PC-9 (cell line): ENCODE measurements at regions of chr12 and their contacts with region 1.

Region 1: DNA sequence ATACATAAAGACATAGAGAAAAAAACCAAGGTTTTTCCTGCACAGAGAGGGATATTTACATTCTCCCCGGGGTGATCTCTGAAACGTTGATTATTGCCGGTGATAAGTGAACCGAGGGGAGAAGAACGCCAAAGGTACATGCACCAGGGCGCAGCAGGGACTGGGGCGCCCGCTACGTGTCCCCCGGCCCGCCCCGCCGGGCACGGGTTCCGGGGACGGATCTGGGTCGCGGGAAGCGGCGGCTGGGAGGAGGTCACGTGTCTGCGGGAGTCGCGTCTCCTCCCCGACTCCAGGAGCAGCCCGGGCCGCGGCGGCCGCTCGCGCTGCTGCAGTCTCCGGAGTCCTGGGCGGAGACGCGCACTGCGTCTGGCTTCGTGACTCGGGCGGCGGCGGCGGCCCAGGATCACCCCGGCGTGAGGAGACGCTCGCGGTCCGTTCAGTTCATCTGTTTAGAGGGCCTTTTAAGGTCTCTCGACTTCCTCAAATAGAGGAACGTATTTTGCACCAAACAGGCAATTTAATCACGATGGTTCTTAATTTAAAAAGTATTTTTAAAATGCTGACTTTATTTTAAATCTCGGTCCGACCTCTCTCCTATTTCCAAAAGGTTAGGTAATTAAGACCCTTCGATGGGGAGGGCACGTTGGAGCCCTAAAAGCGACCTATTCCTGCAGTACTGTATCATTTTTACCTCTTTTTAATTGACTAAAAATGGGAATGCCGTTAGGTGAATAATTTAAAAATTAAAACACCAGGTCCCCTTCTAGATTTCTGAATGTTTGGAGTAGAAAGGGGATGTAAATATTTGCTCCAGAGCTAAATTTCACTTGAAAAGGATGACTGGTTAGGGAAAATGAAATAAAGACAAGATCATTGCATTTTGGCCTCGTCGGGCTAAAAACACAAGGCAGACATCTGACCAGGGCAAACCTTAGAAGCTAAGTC is 1.8 kb upstream of the BHLHE41 start:
- DNase-seq: peak; percentile 72 to 91
- H3K4me3 ChIP-seq: peak overlapping the region; percentile 87
- H3K27ac ChIP-seq: peak overlapping the region; percentile 97
- H3K4me1 ChIP-seq: peaks cover 26% of the 10 kb centered on the region
- H3K27me3 ChIP-seq: no peaks in the 10 kb centered on the region
- CTCF ChIP-seq: peak; percentile 35; the same call in 1 of the 2 replicates

Region 2: DNA sequence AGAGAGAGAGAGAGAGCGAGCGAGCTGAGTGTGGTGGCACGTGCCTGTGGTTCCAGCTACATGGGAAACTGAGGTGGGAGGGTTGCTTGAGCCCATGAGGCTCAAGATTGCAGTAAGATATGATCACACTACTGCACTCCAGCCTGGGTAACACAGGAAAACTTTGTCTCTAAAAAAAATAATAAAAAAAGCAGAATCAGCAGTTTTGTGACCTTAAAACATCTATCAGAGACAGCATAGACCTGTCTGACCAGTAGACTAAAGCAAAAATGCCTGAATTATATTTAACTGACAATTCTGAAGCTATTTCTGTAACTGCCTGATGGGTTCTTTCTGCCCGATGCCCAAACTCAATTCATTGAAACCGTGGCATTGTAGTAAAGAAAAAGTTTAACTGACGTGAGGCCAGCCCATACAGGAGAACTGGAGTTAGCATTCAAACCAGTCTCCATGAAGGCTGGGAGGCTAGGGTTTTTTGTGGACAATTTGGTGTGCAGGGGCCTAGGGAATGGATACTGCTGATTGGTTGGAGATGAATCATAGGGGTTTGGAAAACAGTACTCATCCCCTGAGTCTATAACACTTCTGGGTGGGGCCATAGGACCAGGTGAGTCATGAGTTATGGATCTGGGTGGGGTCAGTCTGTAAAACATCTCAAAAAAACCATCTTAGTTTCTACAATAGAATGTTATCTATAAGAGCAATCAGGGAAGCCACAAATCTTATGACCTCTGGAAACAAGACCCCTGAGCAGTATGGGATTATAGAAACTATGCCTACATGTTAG is 176.1 kb before region 1 on chr12:
- CTCF ChIA-PET with region 1: no interaction called
- POLR2A ChIA-PET with region 1: interaction called, 15 read pairs
- intact Hi-C with region 1: no loop called
- DNase-seq: peak in 1 of 2 experiments; percentile 36
- H3K4me3 ChIP-seq: no peak overlapping the region
- H3K27ac ChIP-seq: no peak overlapping the region
- H3K4me1 ChIP-seq: no peaks in the 10 kb centered on the region
- H3K27me3 ChIP-seq: no peaks in the 10 kb centered on the region
- CTCF ChIP-seq: no peak

Region 3: DNA sequence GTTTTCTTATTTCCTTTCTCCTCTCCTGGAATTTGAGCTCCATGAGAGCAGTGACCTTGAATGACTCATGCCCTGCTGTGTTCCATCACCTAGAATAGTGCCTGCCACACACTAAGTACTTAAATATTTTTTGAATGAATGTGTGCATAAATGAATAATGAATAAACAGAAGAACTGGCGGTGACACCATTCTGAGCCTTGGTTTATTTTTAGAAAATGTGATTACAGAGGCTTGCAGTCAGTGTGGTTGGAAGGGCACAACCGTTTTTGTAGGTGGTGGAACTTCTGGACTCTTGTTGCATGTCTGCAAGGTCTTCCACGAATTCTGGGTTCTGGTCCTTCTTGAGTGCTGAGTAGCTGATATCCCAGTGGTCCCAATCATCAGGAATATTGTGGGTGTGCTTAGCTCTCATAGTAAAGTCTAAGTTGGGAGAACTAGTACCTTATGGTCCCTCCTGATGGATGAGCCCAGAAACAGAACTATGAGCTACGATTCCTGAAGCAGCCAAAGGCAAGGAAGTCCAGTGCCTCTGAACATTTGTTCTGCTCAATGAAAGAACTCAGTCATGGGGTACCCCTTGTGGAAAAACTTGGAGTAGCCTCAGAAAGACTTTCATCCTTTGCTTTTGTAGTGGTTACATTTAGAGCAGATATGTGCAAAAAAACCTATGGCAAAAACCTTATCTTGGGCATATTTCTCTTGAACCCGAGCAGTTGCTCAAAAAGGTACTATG is 27.0 kb after region 1 on chr12:
- CTCF ChIA-PET with region 1: interaction called, 6 read pairs
- POLR2A ChIA-PET with region 1: interaction called, 10 read pairs
- intact Hi-C with region 1: no loop called
- DNase-seq: peak; percentile 61 to 97
- H3K4me3 ChIP-seq: peak overlapping the region; percentile 17; the same call in 1 of the 2 replicates
- H3K27ac ChIP-seq: peak overlapping the region; percentile 75
- H3K4me1 ChIP-seq: peaks cover 49% of the 10 kb centered on the region
- H3K27me3 ChIP-seq: no peaks in the 10 kb centered on the region
- CTCF ChIP-seq: peak; percentile 43; the same call in 1 of the 2 replicates

Region 4: GRCh38 chr12:26239122-26239851 is 112.7 kb after region 1 on chr12:
- CTCF ChIA-PET with region 1: no interaction called
- POLR2A ChIA-PET with region 1: no interaction called
- intact Hi-C with region 1: loop called (anchors 1 kb)
- DNase-seq: peak; percentile 91 to 99
- H3K4me3 ChIP-seq: peak overlapping the region; percentile 23; the same call in 1 of the 2 replicates
- H3K27ac ChIP-seq: peak overlapping the region; percentile 85
- H3K4me1 ChIP-seq: peaks cover 72% of the 10 kb centered on the region
- H3K27me3 ChIP-seq: no peaks in the 10 kb centered on the region
- CTCF ChIP-seq: no peak

Region 5: DNA sequence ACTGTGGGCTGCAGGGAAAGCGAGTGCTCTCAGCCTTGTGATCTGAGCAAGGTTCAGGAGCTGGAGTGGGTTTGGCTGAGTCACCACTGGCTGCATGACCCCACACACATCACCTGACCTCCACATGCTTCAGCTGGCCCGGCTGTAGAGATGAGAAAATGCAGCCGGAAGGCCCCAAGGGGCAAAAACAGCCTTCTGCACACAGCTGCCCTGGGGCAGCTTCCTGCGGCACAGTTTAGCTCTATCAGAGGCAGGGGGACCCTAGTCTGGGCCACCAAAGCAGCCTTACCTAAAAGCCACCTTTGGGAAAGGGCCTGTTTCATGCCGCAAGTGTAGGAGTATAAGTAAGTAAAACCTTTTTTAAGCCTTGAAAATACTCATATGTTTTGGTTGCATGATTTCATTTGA is 192.1 kb after region 1 on chr12:
- CTCF ChIA-PET with region 1: interaction called, 3 read pairs
- POLR2A ChIA-PET with region 1: interaction called, 12 read pairs
- intact Hi-C with region 1: loop called (anchors 1 kb)
- DNase-seq: peak in 1 of 2 experiments; percentile 59
- H3K4me3 ChIP-seq: no peak overlapping the region
- H3K27ac ChIP-seq: peak overlapping the region; percentile 16
- H3K4me1 ChIP-seq: peaks cover 21% of the 10 kb centered on the region
- H3K27me3 ChIP-seq: no peaks in the 10 kb centered on the region
- CTCF ChIP-seq: no peak

Region 6: GRCh38 chr12:26493656-26494055 is 367.0 kb after region 1 on chr12:
- CTCF ChIA-PET with region 1: interaction called, 7 read pairs
- POLR2A ChIA-PET with region 1: interaction called, 6 read pairs
- intact Hi-C with region 1: loop called (anchors 5 kb)
- DNase-seq: peak; percentile 59 to 81
- H3K4me3 ChIP-seq: no peak overlapping the region
- H3K27ac ChIP-seq: peak overlapping the region; percentile 38
- H3K4me1 ChIP-seq: peaks cover 16% of the 10 kb centered on the region
- H3K27me3 ChIP-seq: no peaks in the 10 kb centered on the region
- CTCF ChIP-seq: no peak